Activated CD8-positive, alpha-beta memory T cell treated with anti-CD3 and anti-CD28 coated beads, Interleukin-2, amount 10 ng/mL, durations not matched to agents 7 days and 5 days (primary cell): ENCODE measurements at regions of chr7 and their contacts with region 1.

Region 1: DNA sequence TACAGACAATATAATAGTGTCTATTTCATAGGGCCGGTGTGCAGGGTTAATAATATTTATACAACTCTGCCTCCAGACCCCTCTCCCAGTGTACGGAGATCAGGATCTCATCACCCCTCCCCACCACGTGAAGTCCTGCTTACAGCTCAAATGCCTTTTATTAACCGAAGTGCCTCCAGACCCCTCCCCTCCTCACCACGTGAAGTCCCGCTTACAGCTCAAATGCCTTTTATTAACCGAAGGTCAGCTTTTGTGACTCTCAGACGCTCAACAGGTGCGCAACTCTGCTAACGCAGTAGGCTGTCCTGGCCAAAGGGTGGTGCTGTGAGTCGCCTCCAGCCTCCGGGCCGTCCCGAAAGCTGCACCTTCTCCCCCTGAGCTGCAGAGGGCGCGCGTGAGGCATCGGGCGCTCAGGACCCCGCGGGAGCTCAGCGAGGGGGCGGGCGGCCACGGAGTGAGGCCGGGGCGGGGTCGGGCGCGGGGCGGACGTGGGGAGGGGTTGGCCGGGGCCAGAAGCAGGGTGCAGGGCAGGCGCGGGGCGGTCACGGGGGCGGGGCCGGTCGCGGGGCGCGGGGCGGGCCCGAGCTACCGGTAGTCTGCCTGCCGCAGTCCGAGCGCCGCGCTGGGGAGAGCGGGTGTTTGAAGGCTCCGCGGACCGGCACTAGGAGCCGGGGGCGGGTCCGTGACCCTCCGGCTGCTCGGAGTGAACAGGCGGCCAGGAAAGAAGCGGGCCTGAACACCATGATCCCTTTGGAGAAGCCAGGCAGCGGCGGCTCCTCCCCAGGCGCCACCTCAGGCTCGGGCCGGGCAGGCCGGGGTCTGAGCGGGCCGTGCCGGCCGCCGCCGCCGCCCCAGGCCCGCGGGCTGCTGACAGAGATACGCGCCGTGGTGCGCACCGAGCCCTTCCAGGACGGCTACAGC is at the start of gene STK17A:
- DNase-seq: peak; percentile 95
- ATAC-seq: peak; percentile 82
- H3K4me3 Mint-ChIP-seq: peak within 1 kb of the TSS; percentile 98
- H3K27ac Mint-ChIP-seq: peak within 1 kb of the TSS; percentile 97
- H3K4me1 Mint-ChIP-seq: peaks cover 23% of the 10 kb centered on the region
- H3K27me3 Mint-ChIP-seq: peaks cover 18% of the 10 kb centered on the region
- total RNA-seq, gene STK17A: 84.9 to 86.1 TPM

Region 2: GRCh38 chr7:43516581-43517342 is 66.0 kb before region 1 on chr7:
- CTCF ChIA-PET with region 1: interaction called, 14 read pairs
- DNase-seq: peak; percentile 67
- ATAC-seq: peak; percentile 82
- H3K4me3 Mint-ChIP-seq: peak overlapping the region; percentile 32
- H3K27ac Mint-ChIP-seq: peak overlapping the region; percentile 85
- H3K4me1 Mint-ChIP-seq: peaks cover 42% of the 10 kb centered on the region
- H3K27me3 Mint-ChIP-seq: peaks cover 26% of the 10 kb centered on the region

Region 3: GRCh38 chr7:43612599-43613589 is 30.1 kb after region 1 on chr7:
- CTCF ChIA-PET with region 1: interaction called, 41 read pairs
- DNase-seq: peak; percentile 52
- ATAC-seq: peak; percentile 82
- H3K4me3 Mint-ChIP-seq: no peak overlapping the region
- H3K27ac Mint-ChIP-seq: peak overlapping the region; percentile 88
- H3K4me1 Mint-ChIP-seq: peaks cover 66% of the 10 kb centered on the region
- H3K27me3 Mint-ChIP-seq: no peaks in the 10 kb centered on the region

Region 4: GRCh38 chr7:43647673-43648472 is 65.1 kb after region 1 on chr7:
- CTCF ChIA-PET with region 1: interaction called, 83 read pairs
- DNase-seq: peak; percentile 69
- ATAC-seq: peak; percentile 29
- H3K4me3 Mint-ChIP-seq: peak overlapping the region; percentile 76
- H3K27ac Mint-ChIP-seq: peak overlapping the region; percentile 97
- H3K4me1 Mint-ChIP-seq: peaks cover 95% of the 10 kb centered on the region
- H3K27me3 Mint-ChIP-seq: no peaks in the 10 kb centered on the region

Region 5: GRCh38 chr7:43693687-43694398 is 111.1 kb after region 1 on chr7:
- CTCF ChIA-PET with region 1: interaction called, 332 read pairs
- DNase-seq: no peak
- ATAC-seq: no peak
- H3K4me3 Mint-ChIP-seq: no peak overlapping the region
- H3K27ac Mint-ChIP-seq: no peak overlapping the region
- H3K4me1 Mint-ChIP-seq: peaks cover 25% of the 10 kb centered on the region
- H3K27me3 Mint-ChIP-seq: no peaks in the 10 kb centered on the region

Region 6: GRCh38 chr7:43721193-43721806 is 138.5 kb after region 1 on chr7:
- CTCF ChIA-PET with region 1: interaction called, 115 read pairs
- DNase-seq: no peak
- ATAC-seq: no peak
- H3K4me3 Mint-ChIP-seq: no peak overlapping the region
- H3K27ac Mint-ChIP-seq: no peak overlapping the region
- H3K4me1 Mint-ChIP-seq: peaks cover 30% of the 10 kb centered on the region
- H3K27me3 Mint-ChIP-seq: no peaks in the 10 kb centered on the region